ENCODE measurements at regions of chr6 and their contacts with region 1.

Region 1: GRCh38 chr6:3732345-3733141 is 19.0 kb downstream of the PXDC1 start:
- DNase-seq: peak in 1 of 2 donors; percentile 89
- H3K4me3 ChIP-seq: no peak overlapping the region
- H3K27ac ChIP-seq: no peak overlapping the region
- H3K4me1 ChIP-seq: peaks cover 40% of the 10 kb centered on the region
- H3K27me3 ChIP-seq: no peaks in the 10 kb centered on the region
- CTCF ChIP-seq: peak; percentile 70 to 82 (median 73)
- POLR2A ChIP-seq: no peak

Region 2: DNA sequence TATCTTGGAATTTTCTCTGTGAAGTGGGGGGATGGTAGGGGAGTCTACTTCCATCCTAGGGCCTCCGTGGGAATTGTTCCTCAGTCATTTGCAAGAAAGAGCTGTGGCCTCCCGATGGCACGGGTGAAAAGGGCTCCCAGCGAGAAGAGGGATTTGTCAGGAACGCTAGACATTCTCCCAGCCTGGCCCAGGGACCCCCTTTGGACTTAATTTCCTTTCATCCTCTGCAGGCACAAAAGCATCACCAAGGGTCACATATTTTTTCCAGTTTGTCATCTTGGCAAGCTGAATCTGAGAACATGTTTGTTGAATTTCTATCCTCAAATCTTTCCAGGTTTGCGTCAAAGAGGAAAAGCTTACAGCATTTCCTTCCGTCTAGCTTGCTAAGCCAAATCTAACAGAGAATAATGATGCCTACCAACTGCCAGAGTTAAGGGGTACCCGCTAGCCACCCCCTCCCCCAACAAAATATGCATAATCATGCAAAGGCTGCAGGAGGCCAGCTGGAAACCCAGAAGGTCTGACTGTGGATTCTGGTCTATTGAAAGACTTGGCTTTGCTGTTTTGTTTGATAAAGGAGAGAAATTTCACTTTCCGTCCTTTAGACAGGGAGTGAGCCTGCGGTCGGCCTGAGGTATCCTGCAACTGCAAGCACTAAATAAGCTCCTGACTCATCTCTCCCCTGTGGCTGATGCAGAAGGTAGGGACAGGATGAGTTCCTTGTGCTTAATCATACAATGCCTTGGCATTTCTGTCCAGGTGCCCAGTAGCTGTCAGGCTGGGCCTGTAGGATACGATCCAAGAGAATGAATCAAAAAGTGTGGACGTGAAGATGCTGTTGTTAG is 450.7 kb before region 1 on chr6:
- intact Hi-C with region 1: loop called (anchors 5 kb)
- DNase-seq: no peak
- H3K4me3 ChIP-seq: no peak overlapping the region
- H3K27ac ChIP-seq: peak overlapping the region; percentile 34
- H3K4me1 ChIP-seq: peaks cover 30% of the 10 kb centered on the region
- H3K27me3 ChIP-seq: no peaks in the 10 kb centered on the region
- CTCF ChIP-seq: no peak
- POLR2A ChIP-seq: no peak

Region 3: DNA sequence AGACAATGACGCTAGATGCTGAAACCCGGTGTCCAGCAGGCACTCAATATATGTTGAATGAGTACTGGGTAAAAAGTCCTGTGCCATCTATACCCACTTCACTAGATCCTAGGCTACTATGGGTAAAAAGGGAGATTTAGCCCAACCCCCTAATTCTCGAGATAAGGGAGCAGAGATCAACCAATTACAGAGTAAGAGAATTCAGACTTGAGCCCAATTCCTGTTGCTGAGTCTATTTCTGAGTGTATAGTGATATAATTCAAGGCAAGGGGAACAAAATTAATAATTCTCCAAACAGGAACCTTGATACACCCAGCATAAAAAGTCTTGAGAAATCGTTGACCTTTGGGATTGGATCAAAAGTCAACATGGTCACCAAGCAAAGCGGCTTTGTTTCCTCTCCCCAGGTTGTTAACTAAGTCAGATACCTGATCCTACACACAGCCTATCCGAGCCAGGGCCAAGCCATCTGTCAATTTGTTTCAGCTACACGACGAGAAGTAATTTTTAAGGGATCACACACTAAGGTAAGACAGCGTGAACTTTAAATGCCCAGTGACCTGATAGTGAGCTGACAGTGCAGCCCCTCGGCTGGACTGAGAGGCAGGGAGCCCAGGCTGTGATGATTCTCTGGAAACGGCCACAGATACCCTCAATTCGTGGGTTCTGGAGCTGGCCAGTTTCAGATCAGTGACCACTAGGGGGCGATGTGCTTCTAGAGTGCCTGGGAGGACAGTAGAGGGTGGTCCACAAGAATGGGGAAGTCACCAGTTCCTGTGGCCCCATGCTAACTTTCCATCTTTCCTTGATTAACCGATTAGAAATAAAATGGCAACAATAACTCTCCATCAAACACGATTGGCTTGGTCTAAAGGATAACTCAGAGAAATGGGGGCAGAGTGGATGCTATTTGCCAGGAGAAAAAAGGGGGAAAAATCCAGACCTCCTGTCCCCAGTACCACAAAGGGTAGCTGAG is 321.9 kb before region 1 on chr6:
- intact Hi-C with region 1: loop called (anchors 5 kb)
- DNase-seq: no peak
- H3K4me3 ChIP-seq: no peak overlapping the region
- H3K27ac ChIP-seq: no peak overlapping the region
- H3K4me1 ChIP-seq: peaks cover 22% of the 10 kb centered on the region
- H3K27me3 ChIP-seq: no peaks in the 10 kb centered on the region
- CTCF ChIP-seq: peak in 2 of 3 experiments; percentile 6 to 33
- POLR2A ChIP-seq: no peak

Region 4: GRCh38 chr6:3695065-3695817 is 37.3 kb before region 1 on chr6:
- intact Hi-C with region 1: loop called (anchors 1 kb)
- DNase-seq: no peak
- H3K4me3 ChIP-seq: no peak overlapping the region
- H3K27ac ChIP-seq: no peak overlapping the region
- H3K4me1 ChIP-seq: no peaks in the 10 kb centered on the region
- H3K27me3 ChIP-seq: no peaks in the 10 kb centered on the region
- CTCF ChIP-seq: no peak
- POLR2A ChIP-seq: no peak